ENCODE measurements at regions of chr12 and their contacts with region 1.

Region 1: DNA sequence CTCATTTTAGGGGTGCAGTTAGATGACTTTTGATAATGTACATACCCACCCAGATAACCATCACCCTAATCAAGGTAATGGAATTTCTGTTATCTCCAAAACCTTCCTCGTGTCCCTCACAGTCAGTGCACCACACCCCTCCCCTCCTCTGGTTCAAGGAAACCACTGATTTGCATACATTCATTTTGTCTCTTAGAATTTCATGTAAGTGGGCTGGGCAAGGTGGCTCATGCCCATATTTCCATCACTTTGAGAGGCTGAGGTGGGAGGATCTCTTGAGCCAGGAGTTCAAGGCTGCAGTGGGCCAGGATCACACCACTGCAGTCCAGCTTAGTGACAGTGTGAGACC is 15.7 kb downstream of the ADIPOR2 start:
- DNase-seq: no peak
- H3K4me3 ChIP-seq: no peak overlapping the region
- H3K27ac ChIP-seq: peak overlapping the region; percentile 6; the same call in 1 of the 2 replicates
- H3K4me1 ChIP-seq: peaks cover 25% of the 10 kb centered on the region
- H3K27me3 ChIP-seq: no peaks in the 10 kb centered on the region
- CTCF ChIP-seq: no peak

Region 2: GRCh38 chr12:1719139-1719538 is 12.5 kb after region 1 on chr12:
- CTCF ChIA-PET with region 1: no interaction called
- POLR2A ChIA-PET with region 1: interaction called, 17 read pairs
- intact Hi-C with region 1: no loop called
- DNase-seq: no peak
- H3K4me3 ChIP-seq: no peak overlapping the region
- H3K27ac ChIP-seq: no peak overlapping the region
- H3K4me1 ChIP-seq: 0 out of 2 replicates have a peak, but pooled peaks cover 5% of the 10 kb centered on the region
- H3K27me3 ChIP-seq: no peaks in the 10 kb centered on the region
- CTCF ChIP-seq: no peak

Measured in PC-9 (cell line).